ENCODE measurements at regions of chr14 and their contacts with region 1.

Region 1: GRCh38 chr14:46661728-46662127 is 10.1 kb upstream of the RPL10L start:
- DNase-seq: no peak
- H3K4me3 ChIP-seq: no peak overlapping the region
- H3K27ac ChIP-seq: no peak overlapping the region
- H3K4me1 ChIP-seq: no peaks in the 10 kb centered on the region
- H3K27me3 ChIP-seq: no peaks in the 10 kb centered on the region
- CTCF ChIP-seq: no peak
- POLR2A ChIP-seq: no peak

Region 2: DNA sequence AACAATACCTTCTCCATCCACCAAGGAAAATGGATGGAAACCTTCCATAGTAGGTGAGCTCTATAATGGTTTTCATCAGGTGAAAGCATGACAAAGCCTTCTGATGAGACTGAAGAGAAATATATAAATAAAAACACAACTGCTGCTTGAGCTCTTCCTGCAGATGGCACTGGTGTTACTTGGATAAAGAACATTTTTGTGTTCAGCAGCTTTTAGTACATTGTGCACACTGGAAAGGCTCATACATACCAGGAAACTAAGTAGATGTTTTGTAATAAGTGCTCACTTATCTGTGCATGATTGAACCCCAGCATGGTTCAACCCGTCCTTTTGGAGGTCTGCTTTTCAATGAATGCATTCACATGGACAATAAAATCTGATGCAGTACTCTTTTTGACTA is 1051.4 kb before region 1 on chr14:
- intact Hi-C with region 1: loop called (anchors 5 kb)
- DNase-seq: no peak
- H3K4me3 ChIP-seq: no peak overlapping the region
- H3K27ac ChIP-seq: no peak overlapping the region
- H3K4me1 ChIP-seq: no peaks in the 10 kb centered on the region
- H3K27me3 ChIP-seq: no peaks in the 10 kb centered on the region
- CTCF ChIP-seq: peak in 1 of 3 donors; percentile 45
- POLR2A ChIP-seq: no peak

Measured in breast epithelium (tissue), 4 donors.